Sciatic nerve (tissue), 2 donors: ENCODE measurements at regions of chr3 and their contacts with region 1.

Region 1: GRCh38 chr3:71463617-71464016 is 119.9 kb downstream of the FOXP1 start:
- DNase-seq: no peak
- ATAC-seq: no peak

Region 2: GRCh38 chr3:71425491-71426071 is 38.0 kb before region 1 on chr3:
- intact Hi-C with region 1: loop called (anchors 1 kb)
- DNase-seq: no peak
- ATAC-seq: no peak

Region 3: GRCh38 chr3:71441217-71441924 is 22.2 kb before region 1 on chr3:
- intact Hi-C with region 1: no loop called
- DNase-seq: no peak
- ATAC-seq: no peak